A673 (cell line): ENCODE measurements at regions of chr19 and their contacts with region 1.

Region 1: DNA sequence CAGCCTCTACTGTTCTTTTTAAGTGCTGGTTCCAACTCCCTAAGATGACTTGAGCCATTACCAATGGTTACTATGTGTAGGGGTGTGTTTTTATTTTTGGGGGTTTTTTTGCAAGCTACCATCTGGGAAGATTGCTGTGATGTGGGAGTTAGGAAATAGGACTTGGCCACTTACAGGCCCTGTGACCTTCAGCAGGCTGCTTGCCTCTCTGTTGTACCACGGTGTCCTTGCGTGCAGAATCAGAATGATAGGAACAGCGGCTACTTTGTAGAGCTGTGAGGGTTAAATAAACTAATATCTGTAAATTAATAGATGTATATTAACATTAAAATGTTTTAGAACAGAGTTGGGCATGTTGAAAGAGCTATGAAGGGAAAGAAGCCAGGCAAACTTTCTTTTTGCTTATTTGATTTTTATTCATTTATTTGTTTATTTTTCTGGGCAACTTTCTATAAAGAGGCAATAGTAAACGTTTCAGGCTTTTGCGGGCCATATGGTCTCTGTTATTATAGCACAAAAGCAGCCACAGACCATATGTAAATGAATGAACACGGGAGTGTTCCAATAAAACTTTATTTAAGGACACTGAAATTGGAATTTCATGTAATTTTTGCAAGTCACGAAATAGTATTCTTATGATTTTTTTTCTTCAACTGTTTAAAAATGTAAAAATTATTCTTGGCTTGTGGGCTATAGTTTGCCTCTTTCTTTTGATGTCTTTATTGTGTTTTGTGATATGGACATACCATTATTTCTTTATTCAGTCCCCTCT is 26.4 kb upstream of the EHD2 start:
- DNase-seq: no peak
- H3K4me3 ChIP-seq: no peak overlapping the region
- H3K27ac ChIP-seq: no peak overlapping the region
- H3K4me1 ChIP-seq: no peaks in the 10 kb centered on the region
- H3K27me3 ChIP-seq: no peaks in the 10 kb centered on the region
- CTCF ChIP-seq: no peak

Region 2: DNA sequence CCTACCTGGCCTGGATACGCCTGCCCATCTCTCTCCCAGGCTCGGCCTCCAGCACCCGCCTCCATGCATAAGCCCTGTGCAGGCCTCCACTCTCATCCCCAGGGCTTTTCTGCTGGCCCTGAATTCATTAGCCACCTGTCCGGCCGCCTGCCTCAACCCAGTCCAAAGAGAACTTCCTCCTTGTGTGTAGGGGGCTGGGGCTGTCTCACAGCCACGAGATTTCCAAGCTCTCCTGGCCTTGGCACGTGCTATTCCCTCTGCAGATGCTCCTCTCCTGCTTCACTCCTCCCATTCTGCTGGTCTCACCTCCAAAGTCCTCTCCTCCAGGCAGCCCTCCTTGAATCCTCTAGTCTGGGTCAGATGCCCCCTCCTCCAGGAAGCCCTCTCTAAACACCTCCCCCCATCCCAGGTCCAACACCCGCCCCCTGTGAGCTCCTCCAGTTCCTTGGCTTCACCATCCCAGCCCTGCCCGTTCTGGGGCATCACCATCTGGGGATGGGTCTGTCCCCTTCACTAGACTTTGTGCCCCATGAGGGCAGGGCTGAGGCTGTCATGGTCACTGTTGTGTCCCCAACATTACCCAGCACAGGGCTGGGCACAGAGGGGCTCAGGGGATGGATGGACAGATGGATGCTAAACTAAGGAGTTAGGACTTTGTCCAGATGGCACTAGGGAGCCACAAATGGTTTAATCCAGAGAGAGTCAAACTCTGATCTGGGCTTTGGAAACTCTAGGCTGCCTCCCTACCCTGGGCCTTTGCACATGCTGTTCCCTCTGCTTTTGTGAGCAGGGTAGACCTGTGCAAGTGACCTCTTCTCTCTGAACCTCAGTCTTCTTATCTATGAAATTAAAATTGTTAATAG is 282.3 kb before region 1 on chr19:
- CTCF ChIA-PET with region 1: no interaction called
- POLR2A ChIA-PET with region 1: interaction called, 14 read pairs
- intact Hi-C with region 1: no loop called
- DNase-seq: no peak
- H3K4me3 ChIP-seq: no peak overlapping the region
- H3K27ac ChIP-seq: no peak overlapping the region
- H3K4me1 ChIP-seq: no peaks in the 10 kb centered on the region
- H3K27me3 ChIP-seq: no peaks in the 10 kb centered on the region
- CTCF ChIP-seq: no peak